Cardiac septum (tissue), 1 donor: ENCODE measurements at regions of chr21 and their contacts with region 1.

Region 1: DNA sequence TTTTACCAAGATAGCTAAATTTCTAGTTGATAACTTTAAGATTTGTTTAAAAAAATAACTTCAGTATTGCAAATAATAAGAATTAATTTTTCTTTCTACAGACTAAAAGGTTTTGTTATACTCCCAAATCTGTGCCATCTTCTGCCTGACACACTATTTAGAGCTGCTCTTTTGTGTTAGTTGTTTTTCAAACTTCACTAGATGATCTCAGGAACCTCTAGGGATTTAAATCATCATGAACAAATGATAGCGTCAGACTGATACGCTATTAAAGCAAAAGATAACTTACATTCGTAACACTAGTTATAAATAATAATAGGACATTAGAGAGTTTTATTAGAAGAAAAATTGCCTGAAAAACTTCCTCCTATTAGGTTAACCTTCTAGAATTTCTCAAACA is 243.1 kb upstream of the CXADR start:
- DNase-seq: no peak

Region 2: DNA sequence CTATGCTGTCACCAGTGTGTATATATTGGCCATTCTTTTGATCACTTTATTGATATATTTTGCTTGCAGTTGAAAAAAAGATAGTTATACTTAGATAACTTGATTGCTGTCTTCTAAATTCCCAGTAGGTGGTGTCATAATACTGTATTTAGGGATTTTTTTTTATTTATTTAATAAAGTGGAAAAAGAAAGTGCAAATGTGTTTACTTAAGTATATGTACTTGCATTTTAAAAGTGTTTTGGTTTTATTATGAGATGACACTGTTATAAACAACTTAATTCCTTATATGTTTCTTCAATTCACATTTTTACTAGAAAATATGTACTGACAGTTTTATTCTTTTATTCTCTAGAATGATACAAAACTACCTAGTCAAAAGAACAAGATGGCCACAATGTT is 1375.2 kb before region 1 on chr21:
- intact Hi-C with region 1: loop called (anchors 10 kb)
- DNase-seq: no peak

Region 3: GRCh38 chr21:17085707-17086106 is 184.1 kb before region 1 on chr21:
- intact Hi-C with region 1: no loop called
- DNase-seq: no peak

Region 4: DNA sequence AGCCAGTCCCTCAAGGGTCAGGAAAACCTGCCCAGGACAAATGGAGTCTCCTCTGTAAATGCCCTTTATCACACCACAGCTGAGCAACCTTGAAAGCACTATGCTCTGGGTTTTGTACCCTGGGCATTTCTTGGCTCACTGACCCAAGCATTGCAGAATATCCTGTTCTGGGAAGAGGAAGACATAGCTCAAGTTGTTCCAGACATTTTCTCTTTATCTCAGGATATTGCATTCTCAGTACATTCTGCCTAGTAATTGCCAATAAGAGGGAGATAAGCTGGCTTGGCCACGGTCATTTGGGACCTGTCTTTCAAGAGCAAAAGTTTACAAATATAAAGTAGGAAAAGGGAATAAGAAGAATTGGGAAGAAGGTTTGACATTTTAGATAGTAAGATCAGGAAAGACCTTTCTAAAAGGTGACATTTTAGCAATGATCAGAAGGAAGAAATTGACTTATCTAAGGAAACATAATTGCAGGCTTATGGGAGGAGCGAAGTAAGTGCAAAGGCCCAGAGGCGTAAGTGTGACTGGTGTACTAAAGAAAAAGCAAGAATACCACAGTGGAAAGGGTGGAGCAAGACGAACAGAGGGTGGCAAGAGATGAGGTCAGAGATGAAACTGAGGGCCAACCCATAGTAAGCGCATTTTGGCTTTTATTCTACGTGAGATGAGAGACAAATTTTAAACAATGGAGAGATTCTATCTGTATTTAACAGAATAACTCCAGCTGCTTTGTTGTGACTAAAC is 150.9 kb before region 1 on chr21:
- intact Hi-C with region 1: no loop called
- DNase-seq: no peak

Region 5: DNA sequence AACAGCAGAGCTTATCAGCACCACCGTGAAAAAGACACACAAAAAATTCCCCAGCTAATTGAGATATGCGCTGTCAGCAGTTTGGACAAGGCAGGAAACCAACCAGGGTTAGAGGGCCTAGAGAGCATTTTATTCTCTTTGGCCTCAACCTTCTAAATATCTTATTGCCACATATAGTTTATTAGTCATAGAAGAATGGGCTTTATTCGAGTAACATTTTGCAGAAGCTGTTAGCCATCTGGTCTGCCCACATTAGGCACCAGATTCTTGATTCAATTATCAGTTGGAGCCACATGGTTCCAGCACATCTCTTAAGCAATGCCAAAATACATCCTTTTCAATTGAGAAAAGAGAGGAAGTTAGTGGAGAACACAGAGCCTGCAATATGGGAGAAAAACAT is 133.2 kb after region 1 on chr21:
- intact Hi-C with region 1: no loop called
- DNase-seq: no peak

Region 6: GRCh38 chr21:17527240-17527639 is 257.5 kb after region 1 on chr21:
- intact Hi-C with region 1: no loop called
- DNase-seq: no peak